ENCODE measurements at regions of chr13 and their contacts with region 1.

Region 1: GRCh38 chr13:42466123-42466522 is 107.8 kb upstream of the TNFSF11 start:
- DNase-seq: peak in 1 of 14 experiments; percentile 53
- ATAC-seq: peak; percentile 41
- H3K4me3 ChIP-seq: no peak overlapping the region
- H3K4me3 Mint-ChIP-seq: peak overlapping the region; percentile 32
- H3K27ac ChIP-seq: no peak overlapping the region
- H3K27ac Mint-ChIP-seq: peak overlapping the region; percentile 57
- H3K4me1 ChIP-seq: no peaks in the 10 kb centered on the region
- H3K4me1 Mint-ChIP-seq: peaks cover 39% of the 10 kb centered on the region
- H3K27me3 ChIP-seq: no peaks in the 10 kb centered on the region
- H3K27me3 Mint-ChIP-seq: no peaks in the 10 kb centered on the region
- CTCF ChIP-seq: no peak

Region 2: GRCh38 chr13:42354241-42355091 is 111.7 kb before region 1 on chr13:
- CTCF ChIA-PET with region 1: no interaction called
- POLR2A ChIA-PET with region 1: no interaction called
- intact Hi-C with region 1: loop called in 1 of 2 experiments (anchors 10 kb)
- DNase-seq: peak in 12 of 14 experiments; percentile 9 to 68 (median 37)
- ATAC-seq: peak; percentile 58
- H3K4me3 ChIP-seq: no peak overlapping the region
- H3K4me3 Mint-ChIP-seq: peak overlapping the region; percentile 35
- H3K27ac ChIP-seq: peak overlapping the region; percentile 32 to 66
- H3K27ac Mint-ChIP-seq: peak overlapping the region; percentile 80
- H3K4me1 ChIP-seq: peaks cover 31% of the 10 kb centered on the region
- H3K4me1 Mint-ChIP-seq: peaks cover 37% of the 10 kb centered on the region
- H3K27me3 ChIP-seq: no peaks in the 10 kb centered on the region
- H3K27me3 Mint-ChIP-seq: no peaks in the 10 kb centered on the region
- CTCF ChIP-seq: no peak

Region 3: DNA sequence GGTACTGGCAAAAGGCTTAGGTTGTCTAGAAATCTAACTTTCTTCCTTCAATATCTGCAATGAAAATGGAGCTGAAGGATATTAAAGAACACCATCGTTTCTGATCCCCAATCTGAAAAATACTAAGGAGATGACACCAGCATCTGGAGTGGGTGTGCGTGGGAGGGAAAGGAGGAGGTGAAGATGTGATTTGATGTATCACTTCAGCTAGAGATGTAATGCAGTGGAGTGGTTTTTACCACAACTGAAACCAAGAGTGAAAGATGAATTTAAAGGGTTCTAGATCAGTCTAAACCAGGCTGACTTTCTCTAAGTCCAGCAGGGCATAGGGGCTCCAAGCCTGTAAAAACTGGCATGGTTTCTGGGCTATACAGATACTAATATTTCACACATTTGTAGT is 45.8 kb before region 1 on chr13:
- CTCF ChIA-PET with region 1: no interaction called
- POLR2A ChIA-PET with region 1: no interaction called
- intact Hi-C with region 1: no loop called
- DNase-seq: no peak
- ATAC-seq: no peak
- H3K4me3 ChIP-seq: no peak overlapping the region
- H3K4me3 Mint-ChIP-seq: no peak overlapping the region
- H3K27ac ChIP-seq: no peak overlapping the region
- H3K27ac Mint-ChIP-seq: no peak overlapping the region
- H3K4me1 ChIP-seq: no peaks in the 10 kb centered on the region
- H3K4me1 Mint-ChIP-seq: no peaks in the 10 kb centered on the region
- H3K27me3 ChIP-seq: no peaks in the 10 kb centered on the region
- H3K27me3 Mint-ChIP-seq: no peaks in the 10 kb centered on the region
- CTCF ChIP-seq: no peak

Region 4: DNA sequence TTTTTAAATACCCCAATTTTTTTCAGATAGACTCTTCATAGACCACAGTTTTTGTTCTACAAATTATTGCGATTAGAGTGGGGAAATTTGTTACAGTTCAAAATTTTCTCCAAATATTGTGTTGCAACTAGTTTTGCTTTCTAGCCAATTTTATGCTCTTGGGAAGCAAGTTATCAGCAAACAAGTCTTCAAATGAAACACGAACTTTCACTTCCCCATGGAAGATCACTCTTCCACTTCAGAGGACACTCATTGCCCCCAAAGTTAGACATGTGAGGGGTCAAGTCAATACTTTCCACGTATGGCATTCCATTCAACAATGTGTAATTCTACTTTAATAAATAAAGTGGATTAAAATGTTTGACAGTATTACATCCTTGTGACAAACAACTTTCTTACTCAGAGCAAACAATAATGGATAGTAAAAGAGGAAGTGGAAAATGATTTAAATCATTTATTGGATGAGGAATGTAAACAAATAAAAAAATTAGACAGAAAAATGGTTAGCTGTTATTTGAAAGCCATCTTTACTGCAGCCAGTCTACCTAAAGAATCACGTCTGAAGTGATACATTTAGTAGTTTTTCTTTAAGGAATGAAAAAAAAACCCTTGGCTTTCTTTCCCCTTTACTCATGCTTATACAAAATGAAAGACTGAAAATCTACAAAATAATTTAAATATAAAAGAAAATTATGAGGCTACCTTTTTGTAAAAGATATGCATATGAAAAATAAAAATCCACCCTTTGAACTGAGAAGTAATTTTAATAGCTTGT is 66.6 kb after region 1 on chr13:
- CTCF ChIA-PET with region 1: no interaction called
- POLR2A ChIA-PET with region 1: no interaction called
- intact Hi-C with region 1: no loop called
- DNase-seq: no peak
- ATAC-seq: no peak
- H3K4me3 ChIP-seq: no peak overlapping the region
- H3K4me3 Mint-ChIP-seq: no peak overlapping the region
- H3K27ac ChIP-seq: no peak overlapping the region
- H3K27ac Mint-ChIP-seq: no peak overlapping the region
- H3K4me1 ChIP-seq: peaks cover 3% of the 10 kb centered on the region
- H3K4me1 Mint-ChIP-seq: peaks cover 10% of the 10 kb centered on the region
- H3K27me3 ChIP-seq: no peaks in the 10 kb centered on the region
- H3K27me3 Mint-ChIP-seq: no peaks in the 10 kb centered on the region
- CTCF ChIP-seq: no peak

Region 5: DNA sequence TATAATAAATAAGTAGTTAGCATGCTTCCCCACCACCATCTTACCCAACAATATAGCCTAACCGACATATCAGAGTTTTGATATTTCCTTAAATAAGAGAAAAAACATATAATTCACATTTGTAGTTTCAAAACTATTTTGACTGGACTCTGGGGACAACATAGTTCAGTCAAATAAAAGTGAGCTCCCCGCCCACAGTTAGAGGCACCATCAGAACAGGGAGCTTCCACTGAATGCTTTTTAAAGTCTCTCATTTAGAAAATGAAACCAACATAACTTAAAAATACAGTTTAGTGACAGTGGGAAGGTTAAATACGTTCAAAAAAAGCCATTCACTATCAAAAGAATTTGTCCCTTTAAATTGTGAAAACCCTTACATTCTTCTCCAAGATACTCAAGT is 433.1 kb after region 1 on chr13:
- CTCF ChIA-PET with region 1: no interaction called
- POLR2A ChIA-PET with region 1: no interaction called
- intact Hi-C with region 1: no loop called
- DNase-seq: no peak
- ATAC-seq: no peak
- H3K4me3 ChIP-seq: no peak overlapping the region
- H3K4me3 Mint-ChIP-seq: no peak overlapping the region
- H3K27ac ChIP-seq: no peak overlapping the region
- H3K27ac Mint-ChIP-seq: no peak overlapping the region
- H3K4me1 ChIP-seq: no peaks in the 10 kb centered on the region
- H3K4me1 Mint-ChIP-seq: no peaks in the 10 kb centered on the region
- H3K27me3 ChIP-seq: no peaks in the 10 kb centered on the region
- H3K27me3 Mint-ChIP-seq: no peaks in the 10 kb centered on the region
- CTCF ChIP-seq: no peak